ENCODE measurements at regions of chr17 and their contacts with region 1.

Region 1: DNA sequence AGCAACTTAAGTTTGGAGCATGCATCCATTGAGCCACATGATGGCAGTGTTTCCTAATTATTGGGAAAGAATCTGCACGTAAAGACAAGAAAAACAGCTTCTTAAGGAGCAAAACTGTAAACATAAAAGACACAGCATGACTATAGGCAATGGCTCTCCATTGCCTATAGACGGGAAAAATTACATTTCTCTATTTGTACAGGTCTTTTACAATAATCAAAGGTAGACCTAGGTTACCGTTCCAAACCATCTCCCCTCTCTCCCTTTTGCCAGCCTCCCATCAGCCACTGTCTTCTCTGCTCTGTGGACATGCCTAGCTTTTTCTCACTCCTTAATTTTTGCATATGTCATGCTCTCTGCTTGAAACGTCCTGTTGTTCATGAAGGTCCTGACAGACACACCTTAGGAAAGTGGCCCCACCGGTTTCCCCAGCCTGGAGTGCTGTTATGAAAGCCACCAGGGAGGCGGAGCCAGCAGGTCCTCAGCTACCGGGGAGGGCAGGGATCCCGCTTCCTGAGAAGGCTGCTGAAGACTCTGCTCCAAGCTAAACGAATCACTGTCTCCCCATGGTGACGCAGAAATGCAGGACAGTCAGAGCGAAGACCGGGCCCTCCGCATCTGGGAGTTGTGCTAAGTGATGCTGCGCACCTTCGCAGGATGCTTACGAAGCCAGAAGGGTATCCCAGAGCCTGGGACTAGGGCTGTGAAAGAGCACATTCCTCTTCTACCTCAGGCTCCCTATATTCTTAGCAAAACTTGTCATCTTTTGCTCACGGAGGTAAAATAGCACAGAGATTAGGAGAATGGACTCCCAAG is 2.2 kb upstream of the SLC16A11 start:
- DNase-seq: peak; percentile 51
- H3K4me3 Mint-ChIP-seq: peak overlapping the region; percentile 73
- H3K27ac Mint-ChIP-seq: peak overlapping the region; percentile 63
- H3K4me1 Mint-ChIP-seq: peaks cover 39% of the 10 kb centered on the region
- H3K27me3 Mint-ChIP-seq: peaks cover 24% of the 10 kb centered on the region

Region 2: DNA sequence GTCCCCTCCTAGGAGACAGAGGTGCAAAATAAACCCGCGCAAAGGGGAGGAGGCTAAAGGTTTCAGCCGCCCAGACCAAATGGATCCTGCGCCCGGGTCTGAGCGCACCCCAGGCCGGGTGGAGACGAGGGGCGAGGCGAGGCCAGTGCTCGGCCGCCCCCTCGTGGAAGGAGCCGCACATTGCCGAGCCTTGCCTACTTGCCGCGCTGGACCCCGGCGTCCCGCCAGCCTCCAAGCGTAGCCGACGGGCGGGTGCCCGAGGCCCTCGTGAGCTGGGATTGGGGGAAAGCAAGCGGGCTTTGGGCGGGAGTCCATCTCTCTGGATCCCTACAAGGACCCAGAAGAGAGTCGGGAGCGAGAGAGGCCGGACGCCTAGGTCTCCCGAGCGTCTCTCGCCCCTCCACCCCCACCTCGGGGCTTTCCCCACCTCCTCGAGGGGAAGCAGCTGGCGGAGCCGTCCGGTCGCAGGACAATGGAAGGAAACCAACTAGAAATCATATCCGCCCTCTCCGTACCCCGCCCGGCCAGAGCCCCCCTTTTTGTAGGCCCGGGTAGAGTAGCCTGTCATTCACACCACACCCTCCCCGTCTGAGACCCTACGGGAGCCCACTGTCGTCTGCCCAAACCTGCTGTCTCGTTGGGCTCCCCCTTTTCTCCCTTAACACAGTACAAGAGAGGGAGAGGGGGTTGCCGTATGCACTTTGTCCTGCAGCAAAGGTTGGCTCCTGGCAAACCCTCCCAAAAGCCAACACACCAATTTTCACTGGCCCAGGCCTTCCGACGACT is 23.9 kb before region 1 on chr17:
- CTCF ChIA-PET with region 1: interaction called, 27 read pairs
- POLR2A ChIA-PET with region 1: interaction called, 7 read pairs
- DNase-seq: peak; percentile 85
- H3K4me3 Mint-ChIP-seq: peak overlapping the region; percentile 48
- H3K27ac Mint-ChIP-seq: peak overlapping the region; percentile 54
- H3K4me1 Mint-ChIP-seq: peaks cover 65% of the 10 kb centered on the region
- H3K27me3 Mint-ChIP-seq: peaks cover 1% of the 10 kb centered on the region

Region 3: GRCh38 chr17:7064261-7064660 is 18.1 kb after region 1 on chr17:
- CTCF ChIA-PET with region 1: no interaction called
- POLR2A ChIA-PET with region 1: no interaction called
- DNase-seq: no peak
- H3K4me3 Mint-ChIP-seq: no peak overlapping the region
- H3K27ac Mint-ChIP-seq: no peak overlapping the region
- H3K4me1 Mint-ChIP-seq: peaks cover 7% of the 10 kb centered on the region
- H3K27me3 Mint-ChIP-seq: peaks cover 21% of the 10 kb centered on the region

Region 4: GRCh38 chr17:7081341-7082062 is 35.4 kb after region 1 on chr17:
- CTCF ChIA-PET with region 1: interaction called, 19 read pairs
- POLR2A ChIA-PET with region 1: interaction called, 5 read pairs
- DNase-seq: peak; percentile 77
- H3K4me3 Mint-ChIP-seq: no peak overlapping the region
- H3K27ac Mint-ChIP-seq: no peak overlapping the region
- H3K4me1 Mint-ChIP-seq: peaks cover 40% of the 10 kb centered on the region
- H3K27me3 Mint-ChIP-seq: peaks cover 24% of the 10 kb centered on the region

Region 5: GRCh38 chr17:7177196-7177953 is 131.3 kb after region 1 on chr17:
- CTCF ChIA-PET with region 1: interaction called, 24 read pairs
- POLR2A ChIA-PET with region 1: interaction called, 4 read pairs
- DNase-seq: peak; percentile 67
- H3K4me3 Mint-ChIP-seq: peak overlapping the region; percentile 25
- H3K27ac Mint-ChIP-seq: no peak overlapping the region
- H3K4me1 Mint-ChIP-seq: peaks cover 12% of the 10 kb centered on the region
- H3K27me3 Mint-ChIP-seq: peaks cover 22% of the 10 kb centered on the region

Region 6: DNA sequence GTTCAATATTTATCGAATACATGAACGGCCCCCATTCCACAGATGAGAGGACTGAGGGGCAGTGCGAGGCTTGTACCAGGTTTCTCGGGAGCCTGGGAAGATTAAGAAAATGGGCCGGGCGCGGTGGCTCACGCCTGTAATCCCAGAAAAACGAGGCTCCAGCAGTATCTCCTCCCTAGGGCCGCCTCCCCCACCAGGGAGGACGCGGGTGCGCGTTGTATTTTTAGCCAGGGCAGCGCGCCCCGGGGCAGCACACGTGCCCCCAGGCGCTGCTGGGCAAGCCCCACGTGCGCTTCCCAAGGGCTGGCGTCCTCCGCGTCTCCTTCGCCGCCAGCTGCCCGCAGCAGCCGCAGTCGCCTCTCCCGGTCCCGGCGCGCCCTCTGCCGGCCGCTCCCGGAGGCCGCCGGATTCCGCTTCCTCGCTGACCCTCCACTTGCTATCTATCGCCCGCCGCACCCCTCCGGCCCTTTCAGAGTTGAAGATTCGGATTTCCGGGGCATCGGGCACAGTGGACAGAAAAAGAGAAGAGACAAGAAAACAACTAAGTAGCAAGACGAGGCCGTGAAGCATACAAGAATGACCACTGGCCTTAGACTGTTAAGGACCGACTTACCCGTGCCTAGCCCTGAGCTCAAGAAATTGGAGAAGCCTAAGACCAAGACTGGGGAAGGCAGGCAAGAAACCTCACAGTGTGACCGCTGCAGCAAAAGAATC is 250.2 kb after region 1 on chr17:
- CTCF ChIA-PET with region 1: interaction called, 26 read pairs
- POLR2A ChIA-PET with region 1: no interaction called
- DNase-seq: peak; percentile 71
- H3K4me3 Mint-ChIP-seq: no peak overlapping the region
- H3K27ac Mint-ChIP-seq: no peak overlapping the region
- H3K4me1 Mint-ChIP-seq: peaks cover 29% of the 10 kb centered on the region
- H3K27me3 Mint-ChIP-seq: peaks cover 40% of the 10 kb centered on the region